ENCODE measurements at regions of chr20 and their contacts with region 1.

Region 1: GRCh38 chr20:11591965-11592364 is 325.7 kb upstream of the BTBD3 start:
- DNase-seq: no peak
- ATAC-seq: no peak
- H3K4me3 Mint-ChIP-seq: no peak overlapping the region
- H3K27ac Mint-ChIP-seq: no peak overlapping the region
- H3K4me1 Mint-ChIP-seq: no peaks in the 10 kb centered on the region
- H3K27me3 Mint-ChIP-seq: no peaks in the 10 kb centered on the region
- CTCF ChIP-seq: no peak

Region 2: DNA sequence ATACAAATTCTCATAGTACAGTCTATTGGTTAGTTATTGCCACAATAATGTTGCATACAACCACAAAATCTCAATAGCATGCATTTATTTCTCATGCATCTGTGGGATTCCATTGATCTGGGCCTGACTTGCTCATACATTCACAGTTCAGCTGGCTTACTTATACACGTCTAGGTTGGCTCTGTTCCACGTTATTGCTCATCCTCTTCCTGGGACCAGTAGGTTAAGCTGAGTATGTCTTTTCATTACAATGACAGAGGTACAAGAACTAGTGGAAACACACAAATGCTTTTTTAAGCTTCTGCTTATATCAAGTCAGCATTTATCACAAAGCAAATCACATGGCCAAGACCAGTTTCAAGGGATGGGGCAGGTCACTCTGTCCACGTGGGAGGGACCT is 159.6 kb before region 1 on chr20:
- CTCF ChIA-PET with region 1: no interaction called
- POLR2A ChIA-PET with region 1: no interaction called
- intact Hi-C with region 1: no loop called
- DNase-seq: no peak
- ATAC-seq: no peak
- H3K4me3 Mint-ChIP-seq: no peak overlapping the region
- H3K27ac Mint-ChIP-seq: no peak overlapping the region
- H3K4me1 Mint-ChIP-seq: no peaks in the 10 kb centered on the region
- H3K27me3 Mint-ChIP-seq: no peaks in the 10 kb centered on the region
- CTCF ChIP-seq: no peak

Region 3: DNA sequence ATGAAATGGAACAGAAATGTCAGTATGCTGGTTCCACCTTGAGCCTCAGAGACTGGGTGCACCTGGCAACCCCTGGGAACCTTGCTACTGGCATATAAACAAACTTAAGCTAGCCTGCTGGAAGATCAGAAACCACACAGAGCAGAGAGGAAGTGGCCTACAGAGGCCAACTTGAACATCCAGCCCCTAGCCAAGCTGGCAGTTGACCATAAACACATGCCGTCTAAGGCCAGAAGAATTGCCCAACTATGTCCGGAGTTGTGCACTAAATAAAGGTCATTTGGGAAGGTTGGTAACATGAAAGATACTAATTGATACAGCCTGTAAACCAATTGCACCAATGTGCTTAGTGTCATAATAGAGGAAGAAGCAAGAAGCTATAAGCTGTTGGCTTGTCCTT is 59.2 kb after region 1 on chr20:
- CTCF ChIA-PET with region 1: no interaction called
- POLR2A ChIA-PET with region 1: no interaction called
- intact Hi-C with region 1: loop called (anchors 10 kb)
- DNase-seq: no peak
- ATAC-seq: no peak
- H3K4me3 Mint-ChIP-seq: no peak overlapping the region
- H3K27ac Mint-ChIP-seq: no peak overlapping the region
- H3K4me1 Mint-ChIP-seq: no peaks in the 10 kb centered on the region
- H3K27me3 Mint-ChIP-seq: no peaks in the 10 kb centered on the region
- CTCF ChIP-seq: no peak